ENCODE measurements at regions of chr21 and their contacts with region 1.

Region 1: GRCh38 chr21:45140346-45140940 is 66.1 kb downstream of the ADARB1 start:
- DNase-seq: peak; percentile 52
- H3K4me3 ChIP-seq: no peak overlapping the region
- H3K27me3 ChIP-seq: no peaks in the 10 kb centered on the region
- CTCF ChIP-seq: peak; percentile 96

Region 2: DNA sequence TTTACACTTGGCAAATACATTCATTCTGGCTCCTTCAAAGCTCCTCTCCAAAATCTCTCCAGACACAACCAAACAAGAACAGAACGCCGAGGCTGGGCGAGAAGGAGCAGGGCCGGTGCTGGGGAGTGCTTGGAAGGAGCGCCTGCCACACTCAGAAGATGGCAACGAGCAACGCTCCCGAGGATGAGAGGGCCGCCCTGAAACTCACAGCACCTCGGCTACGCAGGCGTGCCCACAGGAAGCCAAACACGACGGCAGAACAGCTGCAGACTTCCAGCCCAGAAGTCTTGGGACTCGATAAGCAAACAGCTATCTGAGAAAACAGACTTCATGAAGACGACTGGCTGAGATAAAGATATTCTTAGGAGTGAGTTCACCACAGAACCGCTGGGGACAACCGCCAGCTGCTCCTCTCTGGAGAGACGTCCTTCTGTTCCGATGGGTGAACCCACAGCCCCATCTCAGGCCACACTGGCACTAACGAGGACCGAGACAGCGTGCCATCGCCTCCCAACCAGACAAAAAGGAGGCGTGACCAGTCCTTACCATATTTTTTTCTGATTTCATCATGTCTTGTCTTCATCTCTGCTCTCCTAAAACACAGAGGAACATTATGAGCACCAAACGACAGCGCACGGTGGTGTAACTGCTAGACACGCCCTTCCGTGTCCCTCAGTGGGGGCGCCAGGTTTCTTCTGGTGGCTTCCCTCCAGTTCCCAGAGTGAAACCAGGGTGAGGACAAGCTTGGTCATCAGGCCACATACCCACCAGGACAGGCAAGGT is 285.6 kb before region 1 on chr21:
- CTCF ChIA-PET with region 1: no interaction called
- POLR2A ChIA-PET with region 1: no interaction called
- DNase-seq: no peak
- H3K4me3 ChIP-seq: no peak overlapping the region
- H3K27me3 ChIP-seq: no peaks in the 10 kb centered on the region
- CTCF ChIP-seq: no peak

Region 3: DNA sequence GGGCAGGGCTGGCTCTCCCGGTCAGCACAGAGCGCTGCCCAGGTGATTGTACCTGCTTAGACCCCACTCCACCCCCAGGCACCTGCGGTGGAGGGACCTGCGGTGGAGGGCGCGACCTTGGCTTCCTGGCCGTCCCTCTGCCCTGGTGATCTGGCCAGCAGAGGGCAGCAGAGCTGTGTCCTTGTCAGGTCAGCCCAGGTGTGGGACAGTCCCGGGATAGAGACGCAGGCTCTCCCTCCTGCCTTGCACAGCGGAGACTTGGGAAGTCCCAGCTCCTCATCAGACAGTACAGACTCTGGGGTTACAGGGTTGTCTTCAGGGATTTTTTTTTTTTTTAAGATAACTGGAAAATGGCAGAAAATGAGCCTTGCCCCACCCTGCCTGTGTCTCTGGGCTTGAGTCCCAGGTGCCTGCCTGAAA is 190.7 kb before region 1 on chr21:
- CTCF ChIA-PET with region 1: interaction called, 237 read pairs
- POLR2A ChIA-PET with region 1: no interaction called
- DNase-seq: no peak
- H3K4me3 ChIP-seq: no peak overlapping the region
- H3K27me3 ChIP-seq: no peaks in the 10 kb centered on the region
- CTCF ChIP-seq: peak; percentile 91

Region 4: DNA sequence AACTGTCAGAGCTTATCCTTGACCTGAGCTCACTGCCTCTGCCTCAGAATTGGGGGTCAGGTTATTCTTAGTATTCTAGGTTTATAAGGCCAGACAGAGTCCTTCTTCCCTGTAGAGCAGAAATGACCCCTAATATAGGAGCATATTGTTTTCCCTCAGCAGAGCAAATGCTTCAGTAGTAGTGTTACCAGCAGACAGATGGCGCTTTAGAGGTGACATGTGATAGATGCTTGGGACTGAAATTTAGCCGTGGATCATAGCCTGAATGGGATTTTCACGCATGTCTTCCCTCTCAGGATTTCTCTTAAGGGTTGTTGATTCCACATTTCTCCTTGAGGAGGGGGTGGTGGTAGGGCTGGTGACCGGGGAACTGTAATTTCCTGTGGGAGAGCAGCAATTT is 41.6 kb before region 1 on chr21:
- CTCF ChIA-PET with region 1: interaction called, 17 read pairs
- POLR2A ChIA-PET with region 1: no interaction called
- DNase-seq: no peak
- H3K4me3 ChIP-seq: no peak overlapping the region
- H3K27me3 ChIP-seq: no peaks in the 10 kb centered on the region
- CTCF ChIP-seq: peak; percentile 43

Region 5: GRCh38 chr21:45164124-45164511 is 23.7 kb after region 1 on chr21:
- CTCF ChIA-PET with region 1: interaction called, 11 read pairs
- POLR2A ChIA-PET with region 1: no interaction called
- DNase-seq: no peak
- H3K4me3 ChIP-seq: no peak overlapping the region
- H3K27me3 ChIP-seq: no peaks in the 10 kb centered on the region
- CTCF ChIP-seq: no peak

Region 6: GRCh38 chr21:45281411-45282282 is 141.2 kb after region 1 on chr21:
- CTCF ChIA-PET with region 1: interaction called, 138 read pairs
- POLR2A ChIA-PET with region 1: no interaction called
- DNase-seq: no peak
- H3K4me3 ChIP-seq: no peak overlapping the region
- H3K27me3 ChIP-seq: no peaks in the 10 kb centered on the region
- CTCF ChIP-seq: no peak

Region 7: DNA sequence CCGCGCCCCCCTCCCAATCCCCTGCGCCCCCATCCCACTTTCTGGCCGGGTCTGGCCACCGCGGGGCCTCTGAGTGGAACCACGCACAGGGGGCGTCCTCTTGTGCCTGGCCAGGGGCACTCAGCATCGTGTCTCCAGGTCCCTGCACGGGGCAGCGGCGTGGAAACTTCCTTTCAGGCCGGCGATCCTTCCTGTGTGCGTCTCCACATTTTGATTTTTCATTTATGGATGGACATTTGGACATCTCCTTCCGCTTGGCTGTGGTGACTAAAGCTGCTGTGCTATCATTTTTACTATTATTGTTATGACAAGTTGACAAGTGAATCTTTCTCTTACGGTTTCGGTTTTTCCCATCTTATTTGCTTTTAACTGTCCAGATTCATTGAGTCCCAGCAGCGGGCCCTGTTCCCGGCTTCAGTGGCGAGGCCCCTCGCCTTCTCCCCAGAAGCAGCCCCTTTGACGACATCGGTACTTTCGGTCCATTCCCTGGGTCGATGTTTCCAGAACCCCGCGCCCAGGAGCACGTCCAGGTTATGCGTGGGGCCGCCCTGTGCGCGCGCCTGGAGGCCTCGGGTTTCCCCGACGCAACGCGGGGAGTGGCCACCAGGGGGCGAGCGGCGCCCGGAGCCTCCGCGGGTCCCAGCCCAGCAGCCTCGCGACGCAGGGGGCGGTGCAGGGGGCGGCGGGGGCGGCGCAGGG is 414.2 kb after region 1 on chr21:
- CTCF ChIA-PET with region 1: no interaction called
- POLR2A ChIA-PET with region 1: no interaction called
- DNase-seq: no peak
- H3K4me3 ChIP-seq: peak overlapping the region; percentile 54
- H3K27me3 ChIP-seq: peaks cover 4% of the 10 kb centered on the region; the same call in 1 of the 2 replicates
- CTCF ChIP-seq: peak; percentile 72

Measured in BJ (cell line).